ENCODE measurements at regions of chr22 and their contacts with region 1.

Region 1: DNA sequence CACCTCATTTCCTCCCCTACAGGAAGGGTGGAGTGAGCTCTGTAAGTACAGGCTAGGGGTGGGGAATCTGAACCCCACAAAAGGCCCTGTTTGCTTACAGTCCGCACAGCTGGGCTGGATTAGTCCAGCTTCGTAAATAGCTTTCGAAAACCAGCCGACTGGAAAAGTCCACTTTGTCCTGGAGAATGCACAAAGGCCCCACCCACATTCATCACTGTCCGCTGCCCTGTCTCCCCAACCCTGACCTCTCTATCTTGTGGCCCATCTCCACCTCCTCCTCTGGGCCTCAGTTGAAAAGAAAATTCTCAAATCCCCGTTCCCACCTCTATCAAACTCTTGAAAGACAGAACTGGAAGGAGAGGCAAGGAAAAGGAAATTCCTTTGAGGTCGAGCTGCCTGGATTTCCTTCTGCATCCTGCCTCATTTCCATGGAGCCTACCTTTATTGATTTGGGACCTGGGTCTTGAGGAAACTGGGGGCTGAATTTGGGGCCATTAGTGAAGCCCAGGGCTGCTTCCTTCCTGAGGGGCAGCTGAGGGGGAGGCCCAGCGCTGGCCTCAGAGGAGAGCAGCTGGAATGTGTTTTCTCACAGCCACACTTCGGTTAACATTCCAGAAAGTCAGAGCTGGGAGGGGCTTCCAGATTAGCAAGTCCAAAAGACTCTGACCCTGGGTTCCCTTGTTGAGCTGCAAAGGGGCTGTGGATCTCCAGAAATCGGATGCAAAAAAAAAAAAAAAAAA is 147.6 kb downstream of the FBXO7 start:
- DNase-seq: peak; percentile 51 to 74 (median 68)
- H3K4me3 ChIP-seq: no peak overlapping the region
- H3K27ac ChIP-seq: peak overlapping the region; percentile 9 to 86
- H3K4me1 ChIP-seq: peaks cover 34% of the 10 kb centered on the region
- H3K27me3 ChIP-seq: no peaks in the 10 kb centered on the region
- CTCF ChIP-seq: peak in 1 of 3 donors; percentile 21
- EP300 ChIP-seq: no peak
- POLR2A ChIP-seq: peak; percentile 19

Region 2: DNA sequence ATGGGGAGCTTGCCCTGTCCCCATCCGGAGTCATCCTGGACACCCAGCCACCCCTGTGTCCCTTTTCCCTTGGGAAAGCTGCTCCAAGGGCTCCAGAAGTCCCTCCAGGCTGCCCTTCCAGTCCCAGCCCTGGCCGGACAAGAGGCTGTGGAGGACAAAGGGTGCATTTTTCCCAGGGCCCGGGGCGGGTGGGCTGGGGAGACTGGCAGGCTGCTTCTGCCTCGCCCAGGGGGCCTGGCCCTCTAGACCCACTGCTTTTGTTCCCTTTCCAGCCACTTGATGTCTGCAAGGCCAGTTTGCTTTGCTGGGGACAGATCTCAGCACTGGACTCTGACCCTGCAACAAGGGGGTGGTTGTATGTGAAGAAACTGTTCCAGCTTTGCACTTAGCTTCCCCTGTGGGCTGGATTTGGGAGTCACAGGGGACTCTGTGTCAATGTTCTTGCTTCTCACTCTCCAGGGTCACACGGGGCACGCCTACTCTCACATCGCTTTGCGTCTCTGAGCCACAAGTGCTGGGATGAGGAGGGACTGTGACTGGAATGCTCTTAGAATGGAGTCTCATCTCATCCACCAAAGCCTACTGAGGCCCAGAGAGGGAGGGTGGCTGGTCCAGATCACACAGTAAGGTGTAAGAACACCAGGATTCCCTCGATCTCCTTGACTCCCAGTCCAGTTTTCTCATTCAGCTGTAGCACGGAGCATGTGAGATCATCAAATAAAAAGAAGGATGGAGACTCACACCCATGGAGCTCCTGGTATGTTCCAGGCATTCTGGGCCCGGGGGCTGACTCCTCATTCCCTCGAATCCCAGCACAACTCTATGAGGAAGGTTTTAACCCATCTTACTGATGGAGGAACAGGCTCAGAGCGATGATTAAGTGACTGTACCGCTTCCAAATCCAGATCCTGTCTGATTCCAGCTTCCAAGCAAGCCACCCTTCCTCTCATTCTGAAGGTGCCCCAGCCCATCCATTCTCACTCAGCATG is 87.6 kb before region 1 on chr22:
- intact Hi-C with region 1: loop called in 3 of 4 experiments (anchors 2 to 10 kb)
- DNase-seq: no peak
- H3K4me3 ChIP-seq: no peak overlapping the region
- H3K27ac ChIP-seq: no peak overlapping the region
- H3K4me1 ChIP-seq: peaks cover 20% of the 10 kb centered on the region
- H3K27me3 ChIP-seq: no peaks in the 10 kb centered on the region
- CTCF ChIP-seq: no peak
- EP300 ChIP-seq: no peak
- POLR2A ChIP-seq: no peak

Measured in ovary (tissue), 10 donors.